ENCODE measurements at regions of chr3 and their contacts with region 1.

Region 1: DNA sequence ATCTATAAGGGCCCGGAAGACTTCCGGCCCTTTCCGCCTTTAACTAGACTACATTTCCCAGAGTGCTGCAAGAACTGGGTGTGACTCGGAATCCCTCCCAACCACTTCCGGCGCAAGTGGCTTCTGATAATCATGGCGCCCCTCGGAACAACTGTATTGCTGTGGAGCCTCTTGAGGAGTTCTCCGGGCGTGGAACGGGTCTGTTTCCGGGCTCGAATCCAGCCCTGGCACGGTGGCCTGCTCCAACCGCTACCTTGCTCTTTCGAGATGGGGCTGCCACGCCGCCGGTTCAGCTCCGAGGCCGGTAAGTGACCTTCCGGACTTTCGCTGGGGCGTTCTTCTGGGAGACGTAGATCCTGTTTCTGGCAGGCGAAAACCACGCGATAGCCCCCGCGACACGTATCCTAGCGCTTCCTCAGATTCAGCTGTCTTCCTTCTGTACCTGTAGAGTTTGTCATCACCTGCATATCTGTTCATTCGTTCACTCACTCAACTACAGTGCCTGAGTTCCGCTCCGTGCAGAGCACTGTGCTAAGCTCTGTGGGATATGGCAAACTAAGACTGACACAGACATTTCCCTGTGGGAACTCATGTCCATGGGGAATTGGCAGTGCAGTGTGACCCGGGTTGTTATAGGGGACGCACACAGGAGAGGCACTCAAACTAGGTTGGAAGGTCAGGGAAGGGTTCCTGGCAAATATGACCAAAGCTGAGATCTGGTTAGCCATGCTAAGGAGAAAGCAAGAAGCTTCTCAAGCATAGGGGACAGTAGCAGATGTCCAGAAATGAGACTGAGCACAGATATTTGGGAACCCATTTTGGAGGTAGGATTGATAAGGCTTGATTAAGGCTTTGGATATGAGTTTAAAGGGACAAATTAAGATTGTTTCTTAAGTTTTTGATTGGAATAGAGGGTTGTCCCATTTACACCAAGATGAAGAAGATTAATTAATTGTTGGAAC is at the start of gene MRPS22:
- DNase-seq: peak; percentile 89
- H3K4me3 ChIP-seq: peak within 1 kb of the TSS; percentile 98
- H3K27ac ChIP-seq: peak within 1 kb of the TSS; percentile 66
- H3K4me1 ChIP-seq: peaks cover 13% of the 10 kb centered on the region
- CTCF ChIP-seq: no peak
- total RNA-seq, gene MRPS22: 54.9 and 71.1 TPM in 2 replicates

Region 2: DNA sequence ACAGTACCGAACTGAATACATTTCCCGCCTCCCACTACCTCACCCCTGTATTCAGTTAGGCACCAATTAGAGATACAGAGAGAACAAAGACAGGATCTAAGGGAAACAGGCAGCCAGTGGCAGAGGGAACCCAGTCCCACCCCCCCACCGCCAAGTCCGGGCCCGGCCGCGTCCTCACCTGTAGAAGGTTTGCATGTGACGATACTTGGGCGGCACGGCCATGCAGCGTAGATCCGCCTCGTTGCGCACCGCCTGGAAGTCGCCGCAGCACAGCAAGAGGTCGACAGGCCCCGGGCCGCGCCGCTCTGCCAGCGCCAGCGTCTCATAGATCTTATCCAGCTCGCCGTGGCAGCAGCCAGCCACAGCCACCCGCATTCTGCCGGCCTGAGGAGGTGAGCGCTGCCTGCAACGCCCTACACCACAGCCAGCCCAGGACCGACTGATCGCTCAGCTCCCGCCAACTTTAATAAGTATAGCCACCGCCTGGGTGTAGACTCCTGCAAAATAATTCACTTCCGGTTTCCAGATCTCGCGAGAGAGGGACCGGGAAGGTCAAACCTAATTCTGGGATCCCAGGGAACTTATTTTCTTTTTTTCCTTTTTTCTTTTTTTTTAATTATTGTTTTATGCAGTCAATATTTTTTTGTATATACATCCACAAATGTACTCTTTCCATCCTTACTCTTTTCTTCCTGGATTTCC is 1169.6 kb before region 1 on chr3 and contains the start of gene DBR1:
- CTCF ChIA-PET with region 1: no interaction called
- POLR2A ChIA-PET with region 1: no interaction called
- intact Hi-C with region 1: loop called (anchors 10 kb)
- DNase-seq: peak; percentile 92
- H3K4me3 ChIP-seq: peak within 1 kb of the TSS; percentile 85
- H3K27ac ChIP-seq: peak within 1 kb of the TSS; percentile 85
- H3K4me1 ChIP-seq: peaks cover 28% of the 10 kb centered on the region
- CTCF ChIP-seq: no peak
- total RNA-seq, gene DBR1: 13.6 and 21.4 TPM in 2 replicates

Region 3: GRCh38 chr3:139389458-139390209 is 45.5 kb after region 1 on chr3 and contains the start of gene COPB2:
- CTCF ChIA-PET with region 1: no interaction called
- POLR2A ChIA-PET with region 1: interaction called, 10 read pairs
- intact Hi-C with region 1: loop called (anchors 2 kb)
- DNase-seq: peak; percentile 98
- H3K4me3 ChIP-seq: peak within 1 kb of the TSS; percentile 98
- H3K27ac ChIP-seq: peak within 1 kb of the TSS; percentile 52
- H3K4me1 ChIP-seq: peaks cover 25% of the 10 kb centered on the region
- CTCF ChIP-seq: no peak
- total RNA-seq, gene COPB2: 67.9 and 73.1 TPM in 2 replicates

Region 4: GRCh38 chr3:139506766-139507165 is 162.6 kb after region 1 on chr3:
- CTCF ChIA-PET with region 1: no interaction called
- POLR2A ChIA-PET with region 1: no interaction called
- intact Hi-C with region 1: no loop called
- DNase-seq: no peak
- H3K4me3 ChIP-seq: no peak overlapping the region
- H3K27ac ChIP-seq: no peak overlapping the region
- H3K4me1 ChIP-seq: no peaks in the 10 kb centered on the region
- CTCF ChIP-seq: no peak

Region 5: GRCh38 chr3:139835830-139836683 is 491.9 kb after region 1 on chr3:
- CTCF ChIA-PET with region 1: no interaction called
- POLR2A ChIA-PET with region 1: no interaction called
- intact Hi-C with region 1: no loop called
- DNase-seq: no peak
- H3K4me3 ChIP-seq: no peak overlapping the region
- H3K27ac ChIP-seq: no peak overlapping the region
- H3K4me1 ChIP-seq: no peaks in the 10 kb centered on the region
- CTCF ChIP-seq: no peak